Activated CD8-positive, alpha-beta memory T cell treated with anti-CD3 and anti-CD28 coated beads, Interleukin-2, amount 10 ng/mL, durations not matched to agents 7 days and 5 days (primary cell): ENCODE measurements at regions of chr1 and their contacts with region 1.

Region 1: GRCh38 chr1:205658943-205659581 is 21.2 kb downstream of the SLC45A3 start:
- DNase-seq: peak; percentile 85
- ATAC-seq: peak; percentile 93
- H3K4me3 Mint-ChIP-seq: no peak overlapping the region
- H3K27ac Mint-ChIP-seq: no peak overlapping the region
- H3K4me1 Mint-ChIP-seq: peaks cover 3% of the 10 kb centered on the region
- H3K27me3 Mint-ChIP-seq: peaks cover 3% of the 10 kb centered on the region

Region 2: DNA sequence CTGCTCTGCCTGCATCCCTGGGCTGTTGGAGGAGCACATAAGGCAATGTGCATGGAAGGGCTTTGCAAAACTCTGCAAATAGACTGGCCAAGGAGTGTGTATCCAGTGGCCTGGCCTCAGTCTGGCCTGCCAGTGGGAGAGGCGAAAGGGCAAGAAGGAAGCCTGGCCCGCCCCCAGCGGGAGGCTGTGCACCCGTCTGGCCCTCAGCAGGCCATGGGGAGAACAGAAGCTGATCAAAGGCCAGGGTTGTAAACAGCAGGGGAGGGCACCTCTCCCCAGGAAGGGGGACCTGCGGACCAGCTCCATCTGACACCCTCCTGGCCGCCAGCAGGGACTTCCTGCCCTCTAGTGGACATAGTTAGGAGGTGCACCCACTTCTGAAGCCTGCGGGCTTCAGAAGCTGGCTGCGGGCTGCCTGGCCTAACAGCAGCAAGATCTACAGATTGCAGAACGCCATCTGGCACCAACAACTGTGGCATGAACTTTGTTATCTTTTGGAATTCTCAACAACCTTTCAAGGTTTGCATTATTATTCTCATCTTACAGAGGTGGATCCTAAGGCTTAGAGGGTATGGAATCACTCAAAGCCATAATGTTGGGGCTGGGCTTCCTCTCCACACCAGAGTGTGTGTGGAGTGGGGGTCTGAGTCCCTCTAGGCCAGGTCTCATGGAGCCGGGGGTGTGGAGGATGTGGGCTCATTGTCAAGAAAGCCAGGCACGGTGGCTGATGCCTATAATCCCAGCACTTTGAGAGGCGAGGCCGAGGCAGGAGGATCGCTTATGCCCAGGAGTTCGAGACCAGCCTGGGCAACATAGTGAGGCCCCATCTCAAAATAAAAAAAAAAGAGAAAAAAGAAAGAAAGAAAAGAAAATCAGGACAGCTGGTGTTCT is 173.5 kb before region 1 on chr1:
- CTCF ChIA-PET with region 1: interaction called, 66 read pairs
- DNase-seq: peak; percentile 79
- ATAC-seq: peak; percentile 59
- H3K4me3 Mint-ChIP-seq: no peak overlapping the region
- H3K27ac Mint-ChIP-seq: no peak overlapping the region
- H3K4me1 Mint-ChIP-seq: peaks cover 36% of the 10 kb centered on the region
- H3K27me3 Mint-ChIP-seq: peaks cover 24% of the 10 kb centered on the region

Region 3: DNA sequence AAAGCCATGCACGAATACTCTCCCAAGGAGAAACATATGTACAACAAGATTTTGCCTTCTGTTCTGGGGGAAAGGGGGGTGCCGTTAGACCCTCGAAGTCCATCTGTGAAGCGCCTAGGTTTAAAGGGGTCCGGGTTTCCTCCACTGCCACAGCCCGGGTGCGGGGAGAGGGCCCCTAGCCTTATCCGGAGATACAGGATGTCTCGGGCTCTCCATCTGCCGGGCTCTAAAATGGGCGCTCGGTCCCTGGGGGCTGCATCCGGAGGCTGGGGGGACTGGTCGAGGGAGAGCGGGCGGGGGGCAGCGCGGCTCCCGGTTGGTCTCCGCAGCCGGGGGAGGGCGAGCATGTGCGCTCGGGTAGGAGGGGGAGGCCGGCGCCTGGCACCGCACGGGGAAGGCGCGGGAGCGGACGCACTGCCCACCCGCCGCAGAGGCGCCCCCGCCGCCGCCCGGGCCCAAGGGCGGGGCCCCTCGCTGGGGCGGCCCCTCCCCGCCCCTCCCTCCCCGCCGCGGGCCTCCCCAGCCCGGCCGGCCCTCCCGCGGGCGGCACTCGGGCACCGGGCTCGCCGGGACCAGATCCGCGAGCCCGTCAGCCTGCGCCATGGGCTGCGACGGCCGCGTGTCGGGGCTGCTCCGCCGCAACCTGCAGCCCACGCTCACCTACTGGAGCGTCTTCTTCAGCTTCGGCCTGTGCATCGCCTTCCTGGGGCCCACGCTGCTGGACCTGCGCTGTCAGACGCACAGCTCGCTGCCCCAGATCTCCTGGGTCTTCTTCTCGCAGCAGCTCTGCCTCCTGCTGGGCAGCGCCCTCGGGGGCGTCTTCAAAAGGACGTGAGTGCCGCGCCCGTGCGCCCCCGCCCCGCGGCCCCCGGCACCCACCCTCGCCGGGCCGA is 90.3 kb before region 1 on chr1:
- CTCF ChIA-PET with region 1: interaction called, 24 read pairs
- DNase-seq: peak; percentile 34
- ATAC-seq: peak; percentile 58
- H3K4me3 Mint-ChIP-seq: no peak overlapping the region
- H3K27ac Mint-ChIP-seq: no peak overlapping the region
- H3K4me1 Mint-ChIP-seq: peaks cover 4% of the 10 kb centered on the region
- H3K27me3 Mint-ChIP-seq: peaks cover 74% of the 10 kb centered on the region

Region 4: DNA sequence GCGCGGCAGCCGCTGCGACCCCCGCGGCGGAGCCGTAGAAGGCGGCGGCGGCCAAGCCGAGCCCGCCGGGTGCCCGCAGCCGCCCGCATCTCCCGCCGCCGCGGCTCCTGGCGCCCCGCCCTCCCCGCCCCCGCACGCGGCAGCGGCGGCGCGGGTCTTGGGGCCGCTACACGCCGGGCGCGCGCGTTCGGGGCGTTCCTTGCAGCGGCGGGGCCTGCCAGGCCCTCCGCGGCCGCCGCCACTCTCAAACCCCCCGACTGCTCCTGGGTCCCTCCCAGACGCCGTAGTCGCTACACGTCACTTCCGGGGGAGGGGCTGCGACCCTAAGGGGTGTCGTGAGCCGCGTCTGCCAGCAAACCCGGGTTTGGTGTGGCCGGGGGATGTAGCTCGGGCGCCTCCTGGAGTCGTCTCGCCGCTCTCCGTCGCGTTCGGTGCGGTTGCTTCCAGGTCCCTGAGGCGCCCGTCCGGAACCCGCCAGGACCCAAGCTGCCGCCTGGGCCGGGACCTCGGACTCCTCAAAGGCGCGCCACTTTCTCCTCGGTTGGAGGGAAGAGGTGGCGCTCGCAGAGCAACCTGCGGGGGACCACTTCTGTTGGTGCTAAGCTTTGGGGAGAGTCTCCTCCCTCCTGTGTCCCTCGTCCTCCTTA is 27.2 kb before region 1 on chr1 and contains the start of gene ELK4:
- CTCF ChIA-PET with region 1: interaction called, 80 read pairs
- DNase-seq: peak; percentile 99
- ATAC-seq: peak; percentile 86
- H3K4me3 Mint-ChIP-seq: peak within 1 kb of the TSS; percentile 91
- H3K27ac Mint-ChIP-seq: peak within 1 kb of the TSS; percentile 100
- H3K4me1 Mint-ChIP-seq: peaks cover 42% of the 10 kb centered on the region
- H3K27me3 Mint-ChIP-seq: peaks cover 6% of the 10 kb centered on the region
- total RNA-seq, gene ELK4: 70.9 to 79.7 TPM

Region 5: DNA sequence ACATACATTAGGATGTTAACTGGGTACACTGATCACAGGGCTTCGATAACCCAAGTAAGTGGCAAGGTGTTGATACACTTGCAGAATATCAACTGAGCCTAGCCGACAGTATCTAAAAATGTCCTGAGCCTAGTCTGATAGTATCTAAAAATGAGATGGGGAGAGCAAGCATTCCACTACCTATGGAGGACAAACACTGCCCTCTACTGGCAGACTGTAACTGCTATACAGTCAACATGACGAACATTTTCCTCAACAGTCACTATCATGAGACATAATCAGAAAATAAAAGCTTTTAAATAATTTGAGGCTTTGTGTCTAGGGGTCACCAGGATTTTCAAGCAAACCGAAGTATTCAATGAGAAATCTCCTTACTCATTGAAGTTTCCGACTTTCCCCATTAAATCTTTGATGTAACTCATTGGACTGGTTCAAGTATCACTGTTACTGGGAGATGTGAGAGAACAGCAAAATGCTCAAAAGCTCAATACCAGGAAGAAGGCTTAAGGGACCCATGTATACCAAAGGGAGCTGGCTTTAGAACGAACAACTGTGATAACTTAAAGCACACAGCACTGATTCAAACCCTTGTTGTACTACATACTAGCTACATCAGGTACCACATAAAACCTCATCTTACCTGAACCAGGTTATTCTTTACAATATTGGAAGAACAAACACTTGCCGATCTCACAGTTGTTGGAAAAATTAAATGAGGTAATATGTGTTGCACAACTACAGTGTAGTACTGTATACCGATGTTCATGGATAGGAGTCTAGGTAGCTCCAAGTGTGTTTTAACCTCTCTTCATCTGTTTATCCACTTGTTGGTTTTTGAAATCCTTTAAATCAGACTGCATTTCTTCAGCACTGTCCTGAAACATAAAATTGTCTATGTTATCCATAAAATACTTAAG is 52.3 kb after region 1 on chr1:
- CTCF ChIA-PET with region 1: interaction called, 153 read pairs
- DNase-seq: peak; percentile 70
- ATAC-seq: peak; percentile 94
- H3K4me3 Mint-ChIP-seq: no peak overlapping the region
- H3K27ac Mint-ChIP-seq: peak overlapping the region; percentile 59
- H3K4me1 Mint-ChIP-seq: peaks cover 7% of the 10 kb centered on the region
- H3K27me3 Mint-ChIP-seq: no peaks in the 10 kb centered on the region

Region 6: GRCh38 chr1:205791568-205792180 is 132.6 kb after region 1 on chr1:
- CTCF ChIA-PET with region 1: interaction called, 17 read pairs
- DNase-seq: peak; percentile 72
- ATAC-seq: peak; percentile 94
- H3K4me3 Mint-ChIP-seq: no peak overlapping the region
- H3K27ac Mint-ChIP-seq: no peak overlapping the region
- H3K4me1 Mint-ChIP-seq: no peaks in the 10 kb centered on the region
- H3K27me3 Mint-ChIP-seq: no peaks in the 10 kb centered on the region

Region 7: GRCh38 chr1:205977402-205978014 is 318.4 kb after region 1 on chr1:
- CTCF ChIA-PET with region 1: interaction called, 74 read pairs
- DNase-seq: peak; percentile 80
- ATAC-seq: peak; percentile 78
- H3K4me3 Mint-ChIP-seq: no peak overlapping the region
- H3K27ac Mint-ChIP-seq: no peak overlapping the region
- H3K4me1 Mint-ChIP-seq: no peaks in the 10 kb centered on the region
- H3K27me3 Mint-ChIP-seq: no peaks in the 10 kb centered on the region